Sigmoid colon (tissue), 7 donors: ENCODE measurements at regions of chr11 and their contacts with region 1.

Region 1: GRCh38 chr11:46006418-46007070 is 84.1 kb downstream of the LARGE2 start:
- DNase-seq: no peak
- H3K4me3 ChIP-seq: no peak overlapping the region
- H3K27ac ChIP-seq: no peak overlapping the region
- H3K4me1 ChIP-seq: peaks cover 0 to 34% (median 18%) of the 10 kb centered on the region in 4 donors
- H3K27me3 ChIP-seq: no peaks in the 10 kb centered on the region
- CTCF ChIP-seq: peak in 3 of 4 experiments; percentile 55 to 65 (median 64)
- EP300 ChIP-seq: no peak
- POLR2A ChIP-seq: no peak

Region 2: DNA sequence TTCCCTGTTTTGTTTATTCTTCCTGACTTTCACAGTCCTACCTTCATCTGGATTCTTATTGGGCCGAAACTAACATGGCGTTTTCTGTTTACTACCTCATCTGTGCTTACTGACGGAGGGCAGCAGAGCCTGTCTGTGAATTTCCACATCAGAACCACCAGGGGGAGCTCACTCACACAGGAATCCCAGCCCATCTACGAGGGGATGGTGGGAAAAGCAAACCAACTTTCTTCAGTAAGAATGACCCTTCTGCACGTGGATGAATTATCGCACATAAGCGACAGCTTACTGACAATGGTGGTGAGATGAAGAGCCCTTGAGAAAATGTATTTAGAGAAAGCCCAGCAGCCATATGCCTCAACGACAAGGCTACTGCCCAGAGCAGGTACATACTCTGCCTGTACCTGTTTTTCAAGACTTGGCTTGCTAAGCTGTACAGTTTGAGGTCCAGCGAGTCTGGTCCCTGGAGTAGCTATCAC is 41.6 kb before region 1 on chr11:
- intact Hi-C with region 1: loop called (anchors 1 kb)
- DNase-seq: peak; percentile 82
- H3K4me3 ChIP-seq: no peak overlapping the region
- H3K27ac ChIP-seq: peak overlapping the region in 3 of 4 donors; percentile 24 to 47 (median 31)
- H3K4me1 ChIP-seq: peaks cover 0 to 7% (median 3%) of the 10 kb centered on the region in 4 donors
- H3K27me3 ChIP-seq: no peaks in the 10 kb centered on the region
- CTCF ChIP-seq: peak; percentile 80 to 91 (median 84)
- EP300 ChIP-seq: no peak
- POLR2A ChIP-seq: no peak

Region 3: GRCh38 chr11:46188045-46188444 is 181.5 kb after region 1 on chr11:
- intact Hi-C with region 1: no loop called
- DNase-seq: no peak
- H3K4me3 ChIP-seq: no peak overlapping the region
- H3K27ac ChIP-seq: no peak overlapping the region
- H3K4me1 ChIP-seq: no peaks in the 10 kb centered on the region
- H3K27me3 ChIP-seq: no peaks in the 10 kb centered on the region
- CTCF ChIP-seq: no peak
- EP300 ChIP-seq: no peak
- POLR2A ChIP-seq: no peak